Activated CD4-positive, alpha-beta memory T cell treated with anti-CD3 and anti-CD28 coated beads for 36 hours (primary cell): ENCODE measurements at regions of chr12 and their contacts with region 1.

Region 1: DNA sequence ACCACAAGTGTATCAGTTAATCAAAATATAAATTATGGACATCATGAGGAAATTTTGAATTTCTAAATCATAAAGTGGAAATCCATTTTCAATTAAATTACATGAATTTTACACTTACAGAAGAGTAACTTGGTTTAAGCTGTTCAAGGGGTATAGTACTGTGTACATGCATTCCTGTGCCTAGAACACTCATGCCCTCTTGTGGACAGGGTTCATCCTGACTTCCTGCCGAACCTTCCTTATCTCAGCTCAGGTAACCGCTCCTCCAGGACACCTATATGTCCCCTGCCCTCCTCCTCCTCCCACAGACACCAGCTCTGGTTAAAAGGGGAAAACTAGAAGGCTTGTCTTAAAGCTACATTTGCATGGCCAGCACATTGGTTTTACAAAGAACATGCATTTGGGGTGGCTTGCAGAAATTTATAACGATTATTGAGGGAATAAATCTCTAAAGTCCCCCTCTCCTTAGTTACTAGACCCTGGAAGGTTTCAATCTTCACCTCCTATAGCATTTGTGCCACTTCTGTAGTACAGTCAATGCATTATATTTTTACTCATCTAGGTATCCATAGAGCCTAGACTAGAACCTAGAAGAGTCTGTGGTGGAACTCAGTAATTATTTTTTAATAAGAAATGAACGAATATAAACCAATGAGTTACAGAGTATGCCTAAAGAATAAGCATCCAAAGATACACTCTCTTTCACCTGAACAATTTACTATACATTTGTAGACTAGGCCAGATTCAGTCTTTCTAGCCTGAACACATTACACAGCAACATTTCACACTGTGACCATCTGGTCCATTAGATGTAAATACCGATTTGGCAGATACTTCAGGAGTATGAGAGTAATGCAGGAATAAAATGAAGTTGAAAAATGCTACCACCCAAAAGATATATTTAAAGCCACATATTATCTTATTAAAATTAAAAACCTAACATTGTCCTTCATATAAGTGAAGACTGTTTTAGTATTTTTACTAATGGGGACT is 345.6 kb downstream of the PAWR start:
- DNase-seq: no peak
- H3K4me3 Mint-ChIP-seq: no peak overlapping the region
- H3K27ac Mint-ChIP-seq: no peak overlapping the region
- H3K4me1 Mint-ChIP-seq: no peaks in the 10 kb centered on the region
- H3K27me3 Mint-ChIP-seq: no peaks in the 10 kb centered on the region

Region 2: DNA sequence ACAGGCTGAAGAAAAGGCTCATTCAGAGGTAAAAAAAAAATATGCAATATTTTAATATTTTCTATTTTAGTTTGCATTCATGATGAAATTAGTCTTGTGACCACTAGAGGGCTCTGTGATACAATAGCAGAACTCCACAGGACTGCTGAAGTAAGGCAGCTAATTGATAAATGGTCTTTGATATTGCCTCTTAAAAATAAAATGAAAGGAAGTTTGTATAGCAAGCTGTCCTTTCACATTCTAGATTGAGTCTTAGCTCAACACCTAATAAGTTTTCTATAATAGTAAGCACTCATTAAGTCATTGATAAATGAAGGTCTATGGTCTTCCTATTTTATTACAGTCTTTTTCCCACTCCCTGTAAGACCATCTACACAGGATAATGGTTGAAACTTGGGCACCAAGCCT is 1198.8 kb before region 1 on chr12:
- CTCF ChIA-PET with region 1: no interaction called
- POLR2A ChIA-PET with region 1: no interaction called
- intact Hi-C with region 1: loop called (anchors 10 kb)
- DNase-seq: no peak
- H3K4me3 Mint-ChIP-seq: no peak overlapping the region
- H3K27ac Mint-ChIP-seq: no peak overlapping the region
- H3K4me1 Mint-ChIP-seq: no peaks in the 10 kb centered on the region
- H3K27me3 Mint-ChIP-seq: no peaks in the 10 kb centered on the region